H1 (cell line): ENCODE measurements at regions of chr2 and their contacts with region 1.

Region 1: GRCh38 chr2:74548900-74549826 is 4.6 kb downstream of the LOXL3 start:
- DNase-seq: peak in 1 of 2 experiments; percentile 87
- H3K4me3 ChIP-seq: peak overlapping the region; percentile 62 to 90 (median 71)
- H3K27ac ChIP-seq: peak overlapping the region; percentile 11; the same call in 1 of the 2 replicates
- H3K4me1 ChIP-seq: peaks cover 5 to 18% (median 7%) of the 10 kb centered on the region in 4 experiments
- H3K27me3 ChIP-seq: peaks cover 4 to 59% (median 28%) of the 10 kb centered on the region in 4 experiments
- CTCF ChIP-seq: no peak; a peak in 1 of 4 replicates
- EP300 ChIP-seq: no peak
- POLR2A ChIP-seq: peak in 1 of 2 experiments; percentile 63; a peak in 2 of 3 replicates
- RAD21 ChIP-seq: no peak; a peak in 1 of 4 replicates

Region 2: GRCh38 chr2:74538881-74539339 is 10.3 kb before region 1 on chr2:
- CTCF ChIA-PET with region 1: interaction called, 3 read pairs
- POLR2A ChIA-PET with region 1: interaction called, 12 read pairs
- DNase-seq: no peak
- H3K4me3 ChIP-seq: no peak overlapping the region
- H3K27ac ChIP-seq: no peak overlapping the region
- H3K4me1 ChIP-seq: no peaks in the 10 kb centered on the region; a peak in 1 of 7 replicates
- H3K27me3 ChIP-seq: no peaks in the 10 kb centered on the region; a peak in 1 of 7 replicates
- CTCF ChIP-seq: no peak
- EP300 ChIP-seq: no peak
- POLR2A ChIP-seq: no peak
- RAD21 ChIP-seq: no peak

Region 3: GRCh38 chr2:74690571-74690970 is 141.4 kb after region 1 on chr2:
- CTCF ChIA-PET with region 1: no interaction called
- POLR2A ChIA-PET with region 1: no interaction called
- DNase-seq: no peak
- H3K4me3 ChIP-seq: no peak overlapping the region
- H3K27ac ChIP-seq: no peak overlapping the region
- H3K4me1 ChIP-seq: no peaks in the 10 kb centered on the region
- H3K27me3 ChIP-seq: no peaks in the 10 kb centered on the region
- CTCF ChIP-seq: peak in 2 of 3 experiments; percentile 76 to 82; a peak in 3 of 4 replicates
- EP300 ChIP-seq: no peak
- POLR2A ChIP-seq: no peak
- RAD21 ChIP-seq: peak; percentile 97 to 98

Region 4: GRCh38 chr2:74876081-74876886 is 327.1 kb after region 1 on chr2:
- CTCF ChIA-PET with region 1: no interaction called
- POLR2A ChIA-PET with region 1: no interaction called
- DNase-seq: peak in 1 of 2 experiments; percentile 57
- H3K4me3 ChIP-seq: no peak overlapping the region
- H3K27ac ChIP-seq: no peak overlapping the region
- H3K4me1 ChIP-seq: peaks cover 0 to 3% (median 0%) of the 10 kb centered on the region in 4 experiments; a peak in 3 of 7 replicates
- H3K27me3 ChIP-seq: no peaks in the 10 kb centered on the region
- CTCF ChIP-seq: peak; percentile 37 to 68 (median 60)
- EP300 ChIP-seq: no peak
- POLR2A ChIP-seq: no peak
- RAD21 ChIP-seq: peak; percentile 76 to 83